ENCODE measurements at regions of chr13 and their contacts with region 1.

Region 1: DNA sequence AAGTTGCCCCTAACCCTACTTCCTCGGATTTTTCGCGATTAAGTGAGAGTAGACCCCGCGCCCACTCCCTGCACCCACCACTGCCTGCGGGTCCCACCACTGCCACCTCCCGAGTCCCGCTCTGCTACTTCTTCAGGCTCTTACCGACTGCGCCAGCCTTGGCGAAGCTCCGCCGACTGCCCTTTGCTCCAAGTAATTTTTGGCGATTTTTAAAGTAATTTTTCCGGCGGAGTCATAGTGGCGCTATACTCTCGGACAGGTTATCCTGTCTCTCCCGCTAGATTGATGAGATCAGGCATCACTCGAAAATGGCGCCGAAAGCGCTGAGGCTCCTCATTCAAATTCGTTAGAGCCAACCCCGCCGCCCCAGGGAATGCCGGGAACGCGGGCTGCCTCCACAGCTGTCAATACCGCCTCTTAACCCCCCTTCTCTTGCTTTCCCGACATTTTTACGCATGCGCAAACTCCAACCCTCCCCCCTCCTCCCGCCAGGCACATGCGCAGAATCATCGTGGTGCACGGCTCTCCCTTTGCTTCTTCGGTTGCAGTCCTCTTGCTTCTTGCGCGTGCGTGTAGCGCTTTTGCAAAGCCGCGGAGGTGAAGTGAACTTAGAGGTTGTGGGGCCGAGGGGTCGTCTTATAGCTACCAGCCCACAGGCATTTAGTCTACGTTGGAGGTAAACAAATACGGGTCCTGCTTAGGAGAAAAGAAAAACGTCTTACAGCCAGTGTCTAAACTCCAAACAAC is 66.6 kb downstream of the KCNRG start:
- DNase-seq: peak; percentile 97 to 98
- ATAC-seq: peak; percentile 96
- H3K4me3 ChIP-seq: peak overlapping the region; percentile 68 to 88 (median 80)
- H3K27ac ChIP-seq: peak overlapping the region; percentile 85 to 90 (median 87)
- H3K4me1 ChIP-seq: peaks cover 57 to 65% of the 10 kb centered on the region in 2 donors
- H3K27me3 ChIP-seq: no peaks in the 10 kb centered on the region
- CTCF ChIP-seq: peak in 2 of 5 experiments; percentile 10 to 19
- POLR2A ChIP-seq: peak; percentile 25 to 63

Region 2: DNA sequence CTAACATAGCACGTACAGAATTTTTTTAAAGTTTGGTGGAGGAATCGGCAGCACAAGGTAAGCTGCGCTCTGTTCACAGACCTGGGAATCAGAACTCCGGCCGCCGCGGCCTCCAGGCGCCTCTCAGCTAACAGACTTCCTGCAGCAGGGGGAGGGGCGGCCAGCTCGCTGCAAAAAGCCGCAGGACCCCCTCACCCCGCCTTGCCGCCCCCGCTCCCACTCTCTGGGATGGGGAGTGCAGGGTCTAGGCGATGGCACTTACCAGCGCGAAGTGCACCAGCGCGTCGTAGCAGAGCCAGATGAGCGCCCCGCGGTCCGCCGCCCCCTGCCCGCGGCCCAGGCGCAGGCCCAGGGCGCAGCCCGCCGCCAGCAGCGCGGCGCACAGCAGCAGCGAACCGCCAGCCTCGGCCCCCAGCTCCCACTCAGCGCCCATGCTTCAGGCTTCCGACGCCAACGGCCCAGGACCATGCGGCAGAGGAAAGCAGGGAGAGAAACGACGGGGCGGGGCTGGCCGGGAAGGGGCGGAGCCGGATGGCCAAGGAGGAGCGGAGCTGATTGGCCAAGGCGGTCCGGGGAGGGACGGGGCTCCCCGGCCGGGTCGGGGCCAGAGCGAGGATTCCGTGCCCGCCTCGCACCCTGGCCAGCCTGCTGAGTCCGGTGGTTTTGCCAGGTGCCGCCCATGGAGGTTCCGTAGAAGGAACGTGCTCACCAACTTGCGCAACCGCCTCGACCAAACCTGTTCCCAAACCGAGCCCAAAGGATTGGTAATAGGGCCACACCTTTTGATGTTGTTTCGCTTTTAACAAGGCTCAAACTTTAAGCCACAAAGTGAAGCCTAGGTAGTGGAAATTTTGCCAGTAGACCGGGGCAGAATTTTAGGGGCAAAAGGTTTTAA is 390.6 kb before region 1 on chr13 and contains the start of gene EBPL:
- in situ Hi-C with region 1: no loop called
- intact Hi-C with region 1: loop called (anchors 1 kb)
- DNase-seq: peak; percentile 90 to 91
- ATAC-seq: peak; percentile 92 to 95
- H3K4me3 ChIP-seq: peak within 1 kb of the TSS; percentile 63 to 81 (median 72)
- H3K27ac ChIP-seq: peak within 1 kb of the TSS; percentile 76 to 89 (median 84)
- H3K4me1 ChIP-seq: peaks cover 13 to 15% of the 10 kb centered on the region in 2 donors
- H3K27me3 ChIP-seq: no peaks in the 10 kb centered on the region
- CTCF ChIP-seq: no peak
- POLR2A ChIP-seq: peak in 1 of 2 donors; percentile 40
- total RNA-seq, gene EBPL: 3.8 to 11.0 (median 8.8) TPM

Region 3: GRCh38 chr13:49936085-49936940 is 145.5 kb before region 1 on chr13 and contains the start of gene SPRYD7:
- in situ Hi-C with region 1: no loop called
- intact Hi-C with region 1: loop called (anchors 1 kb)
- DNase-seq: peak; percentile 96 to 98
- ATAC-seq: peak; percentile 92 to 93
- H3K4me3 ChIP-seq: peak within 1 kb of the TSS; percentile 80 to 98 (median 88)
- H3K27ac ChIP-seq: peak within 1 kb of the TSS; percentile 87 to 95 (median 92)
- H3K4me1 ChIP-seq: peaks cover 49 to 54% of the 10 kb centered on the region in 2 donors
- H3K27me3 ChIP-seq: no peaks in the 10 kb centered on the region
- CTCF ChIP-seq: peak; percentile 88 to 95 (median 93)
- POLR2A ChIP-seq: peak; percentile 77 to 83
- total RNA-seq, gene SPRYD7: 9.8 to 24.7 (median 17.9) TPM

Region 4: DNA sequence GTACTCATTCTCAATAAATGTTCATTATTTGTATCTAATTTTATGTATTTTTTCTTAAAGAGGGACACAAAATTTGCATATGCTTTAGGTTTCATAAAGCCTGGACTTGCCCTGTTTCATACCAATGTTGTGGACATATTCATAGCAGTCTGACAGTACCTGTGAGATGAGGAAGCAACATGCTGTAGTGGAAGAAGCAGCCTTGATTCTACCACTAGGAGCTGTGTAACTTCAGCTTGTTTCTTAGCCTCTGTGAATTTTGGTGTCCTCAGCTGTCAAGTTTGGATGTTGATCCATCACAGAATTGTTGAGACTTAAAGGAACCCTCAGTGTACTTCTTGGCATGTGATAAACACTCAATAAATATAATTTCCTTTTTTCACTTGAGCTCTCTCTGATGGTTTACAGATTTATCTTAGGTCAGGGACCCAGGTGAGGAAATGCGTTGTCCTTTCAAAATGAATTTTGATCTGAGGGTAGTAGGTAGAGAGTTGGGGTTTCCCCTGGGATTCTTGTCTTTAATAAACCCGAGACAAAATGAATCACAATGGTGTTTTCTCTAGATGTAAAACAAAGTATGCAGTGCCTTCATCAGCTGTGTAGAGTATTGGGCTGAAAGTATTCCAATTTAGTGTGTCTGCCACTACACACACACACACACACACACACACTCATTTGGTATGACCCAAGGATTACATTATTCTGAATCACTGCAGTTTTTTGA is 85.5 kb after region 1 on chr13:
- in situ Hi-C with region 1: no loop called
- intact Hi-C with region 1: no loop called
- DNase-seq: no peak
- ATAC-seq: no peak
- H3K4me3 ChIP-seq: no peak overlapping the region
- H3K27ac ChIP-seq: no peak overlapping the region
- H3K4me1 ChIP-seq: no peaks in the 10 kb centered on the region
- H3K27me3 ChIP-seq: no peaks in the 10 kb centered on the region
- CTCF ChIP-seq: no peak
- POLR2A ChIP-seq: no peak

Region 5: DNA sequence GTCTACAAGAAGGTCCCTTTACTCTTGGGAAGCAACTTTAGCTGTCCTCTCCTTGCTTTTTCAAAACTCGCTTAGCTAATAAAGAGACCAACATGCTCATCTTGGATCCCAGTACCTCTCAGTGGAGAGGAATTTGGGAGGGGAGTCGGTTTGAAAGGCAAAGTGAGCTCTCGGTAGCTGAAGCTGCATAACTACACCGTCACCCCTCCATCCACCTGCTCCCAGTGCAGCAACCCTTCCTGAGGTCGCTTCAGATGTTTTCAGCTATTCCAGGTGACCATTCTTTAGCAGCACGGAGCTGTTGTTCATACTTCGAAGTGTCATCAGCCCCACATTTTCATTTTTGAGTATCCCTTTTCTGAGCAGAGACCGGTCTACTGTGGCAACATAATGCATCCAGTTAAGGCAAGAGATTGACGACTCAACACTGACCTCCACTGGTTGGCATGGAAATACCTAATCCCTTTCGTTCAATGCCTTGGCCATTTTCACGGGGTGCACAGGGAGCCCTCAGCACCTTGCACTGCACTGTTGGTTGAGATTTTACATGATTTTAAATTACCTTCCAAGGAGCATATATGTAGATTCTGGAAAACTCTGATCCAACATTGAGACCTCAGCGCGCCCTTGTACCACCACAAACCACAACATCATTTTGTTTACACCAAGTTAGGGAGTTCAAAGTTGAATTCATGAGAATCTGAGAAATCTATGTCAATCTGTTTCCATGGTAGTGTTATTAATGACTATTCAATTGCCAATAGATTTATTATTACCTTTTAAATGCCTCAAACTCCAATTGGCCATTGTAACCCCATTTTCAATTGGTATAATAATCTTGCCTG is 719.5 kb after region 1 on chr13:
- in situ Hi-C with region 1: no loop called
- intact Hi-C with region 1: loop called (anchors 5 kb)
- DNase-seq: peak; percentile 6 to 20
- ATAC-seq: peak; percentile 75 to 95
- H3K4me3 ChIP-seq: no peak overlapping the region
- H3K27ac ChIP-seq: no peak overlapping the region
- H3K4me1 ChIP-seq: peaks cover 5 to 15% of the 10 kb centered on the region in 2 donors
- H3K27me3 ChIP-seq: no peaks in the 10 kb centered on the region
- CTCF ChIP-seq: peak; percentile 39 to 69 (median 64)
- POLR2A ChIP-seq: no peak